ENCODE measurements at regions of chr11 and their contacts with region 1.

Region 1: GRCh38 chr11:103035791-103036434 is 56.0 kb downstream of the DCUN1D5 start:
- DNase-seq: peak in 8 of 9 donors; percentile 20 to 64 (median 54)
- ATAC-seq: peak; percentile 96
- H3K4me3 ChIP-seq: no peak overlapping the region
- H3K4me3 Mint-ChIP-seq: peak overlapping the region in 3 of 10 donors; percentile 7 to 25 (median 12)
- H3K27ac ChIP-seq: no peak overlapping the region
- H3K27ac Mint-ChIP-seq: peak overlapping the region in 5 of 9 donors; percentile 39 to 87 (median 41)
- H3K4me1 ChIP-seq: no peaks in the 10 kb centered on the region
- H3K4me1 Mint-ChIP-seq: peaks cover 0 to 21% (median 6%) of the 10 kb centered on the region in 7 donors
- H3K27me3 ChIP-seq: no peaks in the 10 kb centered on the region
- H3K27me3 Mint-ChIP-seq: peaks cover 0 to 5% (median 0%) of the 10 kb centered on the region in 5 donors

Region 2: GRCh38 chr11:103055221-103055890 is 19.4 kb after region 1 on chr11:
- CTCF ChIA-PET with region 1: interaction called, 3 read pairs
- POLR2A ChIA-PET with region 1: no interaction called
- intact Hi-C with region 1: loop called (anchors 1 kb)
- DNase-seq: peak in 5 of 9 donors; percentile 3 to 19 (median 4)
- ATAC-seq: peak; percentile 47
- H3K4me3 ChIP-seq: no peak overlapping the region
- H3K4me3 Mint-ChIP-seq: no peak overlapping the region
- H3K27ac ChIP-seq: no peak overlapping the region
- H3K27ac Mint-ChIP-seq: no peak overlapping the region
- H3K4me1 ChIP-seq: no peaks in the 10 kb centered on the region
- H3K4me1 Mint-ChIP-seq: no peaks in the 10 kb centered on the region
- H3K27me3 ChIP-seq: no peaks in the 10 kb centered on the region
- H3K27me3 Mint-ChIP-seq: no peaks in the 10 kb centered on the region

Region 3: GRCh38 chr11:103091801-103092524 is 56.0 kb after region 1 on chr11 and contains the start of gene DCUN1D5:
- CTCF ChIA-PET with region 1: no interaction called
- POLR2A ChIA-PET with region 1: interaction called, 3 read pairs
- intact Hi-C with region 1: loop called (anchors 1 to 5 kb)
- DNase-seq: peak; percentile 89 to 94 (median 93)
- ATAC-seq: peak; percentile 99
- H3K4me3 ChIP-seq: peak within 1 kb of the TSS; percentile 93
- H3K4me3 Mint-ChIP-seq: peak within 1 kb of the TSS; percentile 79 to 98 (median 92)
- H3K27ac ChIP-seq: peak within 1 kb of the TSS; percentile 89
- H3K27ac Mint-ChIP-seq: peak within 1 kb of the TSS; percentile 89 to 99 (median 97)
- H3K4me1 ChIP-seq: peaks cover 15 to 25% of the 10 kb centered on the region in 2 donors
- H3K4me1 Mint-ChIP-seq: peaks cover 16 to 40% (median 34%) of the 10 kb centered on the region in 7 donors
- H3K27me3 ChIP-seq: peaks cover 0 to 3% of the 10 kb centered on the region in 2 donors
- H3K27me3 Mint-ChIP-seq: peaks cover 22 to 35% (median 26%) of the 10 kb centered on the region in 5 donors
- total RNA-seq, gene DCUN1D5: 12.2 to 28.5 (median 14.2) TPM

Region 4: DNA sequence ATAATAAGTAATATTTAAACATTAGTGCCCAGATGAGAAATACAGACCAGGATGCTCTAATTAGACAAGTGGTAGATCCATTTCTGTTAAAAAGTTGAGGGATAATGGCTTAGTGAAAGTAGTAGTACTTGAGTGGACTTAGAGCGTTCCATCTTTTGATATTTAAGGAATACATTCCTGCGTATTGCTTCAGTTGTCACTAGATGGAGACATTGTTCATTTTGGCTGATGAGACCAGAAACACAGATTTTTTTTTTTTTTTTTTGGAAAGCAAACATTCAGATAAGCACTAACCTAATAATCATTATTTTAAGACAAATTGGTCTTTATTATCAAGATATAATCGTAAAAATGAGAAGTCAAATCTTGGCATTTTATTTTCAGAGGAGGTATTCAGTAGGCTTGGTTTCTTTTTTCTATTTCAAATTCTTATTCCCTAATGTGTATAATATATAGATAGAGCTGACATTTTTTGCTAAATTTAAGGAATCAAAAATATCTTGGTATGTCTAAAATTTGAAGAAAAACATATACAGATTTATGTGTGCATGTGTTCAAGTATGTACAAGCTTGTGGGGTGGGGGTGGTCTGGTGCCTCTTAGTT is 166.2 kb after region 1 on chr11:
- CTCF ChIA-PET with region 1: no interaction called
- POLR2A ChIA-PET with region 1: no interaction called
- intact Hi-C with region 1: loop called in 1 of 2 experiments (anchors 10 kb)
- DNase-seq: no peak
- ATAC-seq: no peak
- H3K4me3 ChIP-seq: no peak overlapping the region
- H3K4me3 Mint-ChIP-seq: no peak overlapping the region
- H3K27ac ChIP-seq: no peak overlapping the region
- H3K27ac Mint-ChIP-seq: no peak overlapping the region
- H3K4me1 ChIP-seq: no peaks in the 10 kb centered on the region
- H3K4me1 Mint-ChIP-seq: no peaks in the 10 kb centered on the region
- H3K27me3 ChIP-seq: no peaks in the 10 kb centered on the region
- H3K27me3 Mint-ChIP-seq: no peaks in the 10 kb centered on the region

Measured in naive thymus-derived CD4-positive, alpha-beta T cell (primary cell).